ENCODE measurements at regions of chr2 and their contacts with region 1.

Region 1: DNA sequence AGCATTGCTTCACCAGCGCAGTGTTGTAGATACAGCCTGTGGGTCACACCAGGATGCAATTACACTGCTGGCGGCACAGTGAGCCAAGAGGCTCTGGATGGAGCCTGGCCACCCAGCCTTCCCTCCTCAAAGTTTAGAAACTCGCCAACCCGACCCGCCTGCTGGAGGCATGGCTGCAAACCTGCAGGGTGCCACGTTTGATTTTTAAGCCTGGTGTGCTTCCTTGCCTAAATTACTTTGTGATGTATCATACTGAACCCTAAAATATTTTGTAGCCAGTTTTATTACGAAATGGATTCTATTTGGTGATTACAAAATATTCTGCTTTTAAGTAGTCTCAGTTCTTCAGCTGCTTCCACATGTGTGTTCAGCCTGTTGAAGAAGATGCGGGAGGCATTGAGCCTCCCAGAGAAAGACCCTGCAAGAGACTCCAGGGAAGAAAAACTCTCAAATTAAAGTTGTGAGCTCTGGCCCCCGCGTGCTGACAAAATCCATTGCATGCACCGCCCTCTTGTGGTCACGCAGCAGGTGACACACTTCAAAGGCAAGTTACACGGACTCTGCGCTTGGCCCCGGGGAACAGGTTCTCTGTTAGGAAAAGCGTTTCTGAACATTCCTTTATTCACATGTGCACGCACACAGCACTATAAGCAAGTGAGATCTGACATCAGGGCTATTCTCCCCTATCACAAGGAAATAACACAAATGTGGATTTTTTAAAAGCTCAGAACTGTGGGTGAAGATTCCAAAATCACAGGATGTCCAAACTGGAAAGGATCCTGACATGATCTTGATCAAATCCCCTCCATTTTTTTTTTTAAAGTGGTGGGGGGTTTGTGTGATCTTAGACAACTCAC is 63.0 kb upstream of the TWIST2 start:
- DNase-seq: peak; percentile 27 to 82 (median 67)
- ATAC-seq: peak; percentile 56 to 89 (median 84)
- H3K4me3 ChIP-seq: no peak overlapping the region
- H3K27ac ChIP-seq: no peak overlapping the region
- H3K4me1 ChIP-seq: no peaks in the 10 kb centered on the region
- H3K27me3 ChIP-seq: no peaks in the 10 kb centered on the region
- CTCF ChIP-seq: peak; percentile 79 to 86 (median 84)

Region 2: DNA sequence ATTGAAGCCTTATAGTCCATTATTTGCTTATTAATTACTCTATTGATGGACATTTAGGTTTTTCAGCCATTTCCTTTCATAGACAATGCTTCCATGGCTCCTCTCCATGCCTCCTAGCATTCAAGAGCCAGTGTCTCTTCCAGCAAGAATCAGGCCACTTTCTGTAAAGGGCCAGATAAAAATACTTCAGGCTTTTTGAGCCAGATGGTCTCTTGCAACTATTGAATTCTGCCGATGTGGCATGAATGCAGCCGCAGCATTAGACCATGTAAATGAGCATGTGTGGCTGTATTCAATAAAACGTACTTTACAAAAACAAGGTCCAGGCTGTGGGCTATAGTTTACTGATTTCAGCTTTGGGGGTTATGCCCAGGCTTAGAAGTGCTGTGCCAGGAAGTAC is 426.1 kb before region 1 on chr2:
- intact Hi-C with region 1: loop called in 1 of 3 experiments (anchors 5 kb)
- DNase-seq: no peak
- ATAC-seq: no peak
- H3K4me3 ChIP-seq: no peak overlapping the region
- H3K27ac ChIP-seq: no peak overlapping the region
- H3K4me1 ChIP-seq: no peaks in the 10 kb centered on the region
- H3K27me3 ChIP-seq: no peaks in the 10 kb centered on the region
- CTCF ChIP-seq: no peak

Region 3: GRCh38 chr2:238370823-238371372 is 414.0 kb before region 1 on chr2:
- intact Hi-C with region 1: loop called in 1 of 3 experiments (anchors 5 kb)
- DNase-seq: peak in 4 of 6 donors; percentile 45 to 65 (median 46)
- ATAC-seq: peak; percentile 80 to 99 (median 98)
- H3K4me3 ChIP-seq: no peak overlapping the region
- H3K27ac ChIP-seq: no peak overlapping the region
- H3K4me1 ChIP-seq: peaks cover 0 to 3% (median 0%) of the 10 kb centered on the region in 3 donors
- H3K27me3 ChIP-seq: no peaks in the 10 kb centered on the region
- CTCF ChIP-seq: peak; percentile 28 to 58 (median 52)

Measured in pancreas (tissue), 10 donors.